ENCODE measurements at regions of chr22 and their contacts with region 1.

Region 1: GRCh38 chr22:46563381-46564083 is 26.1 kb upstream of the CELSR1 start:
- DNase-seq: peak; percentile 68 to 71
- ATAC-seq: peak; percentile 88 to 91
- H3K4me3 ChIP-seq: no peak overlapping the region
- H3K27ac ChIP-seq: peak overlapping the region; percentile 74 to 80
- H3K4me1 ChIP-seq: peaks cover 13% of the 10 kb centered on the region
- CTCF ChIP-seq: peak; percentile 60
- EP300 ChIP-seq: no peak
- POLR2A ChIP-seq: no peak
- RAD21 ChIP-seq: peak; percentile 70 to 75

Region 2: GRCh38 chr22:46547883-46548244 is 15.7 kb before region 1 on chr22:
- CTCF ChIA-PET with region 1: interaction called, 15 read pairs
- POLR2A ChIA-PET with region 1: no interaction called
- DNase-seq: no peak
- ATAC-seq: peak; percentile 40 to 43; a peak in 2 of 6 replicates
- H3K4me3 ChIP-seq: no peak overlapping the region
- H3K27ac ChIP-seq: peak overlapping the region; percentile 32 to 81; a peak in 3 of 6 replicates
- H3K4me1 ChIP-seq: peaks cover 32% of the 10 kb centered on the region
- CTCF ChIP-seq: no peak
- EP300 ChIP-seq: no peak
- POLR2A ChIP-seq: no peak
- RAD21 ChIP-seq: no peak

Region 3: GRCh38 chr22:46576556-46577367 is 13.2 kb after region 1 on chr22:
- CTCF ChIA-PET with region 1: interaction called, 10 read pairs
- POLR2A ChIA-PET with region 1: no interaction called
- DNase-seq: peak in 1 of 2 experiments; percentile 23
- ATAC-seq: peak; percentile 30 to 47; a peak in 4 of 6 replicates
- H3K4me3 ChIP-seq: peak overlapping the region; percentile 90
- H3K27ac ChIP-seq: peak overlapping the region; percentile 90 to 99
- H3K4me1 ChIP-seq: peaks cover 50% of the 10 kb centered on the region
- CTCF ChIP-seq: no peak
- EP300 ChIP-seq: no peak
- POLR2A ChIP-seq: peak; percentile 6; the same call in 1 of the 2 replicates
- RAD21 ChIP-seq: no peak